ENCODE measurements at regions of chr1 and their contacts with region 1.

Region 1: GRCh38 chr1:26279456-26280332 is at the start of gene SH3BGRL3:
- DNase-seq: peak; percentile 87
- ATAC-seq: peak; percentile 38
- H3K4me3 ChIP-seq: peak within 1 kb of the TSS; percentile 75
- H3K27ac ChIP-seq: peak within 1 kb of the TSS; percentile 99
- H3K4me1 ChIP-seq: peaks cover 84% of the 10 kb centered on the region
- H3K27me3 ChIP-seq: no peaks in the 10 kb centered on the region
- CTCF ChIP-seq: peak; percentile 56
- total RNA-seq, gene SH3BGRL3: 181 and 193 TPM in 2 replicates

Region 2: GRCh38 chr1:25971066-25971810 is 308.5 kb before region 1 on chr1:
- CTCF ChIA-PET with region 1: no interaction called
- POLR2A ChIA-PET with region 1: no interaction called
- intact Hi-C with region 1: no loop called
- DNase-seq: no peak
- ATAC-seq: no peak
- H3K4me3 ChIP-seq: no peak overlapping the region
- H3K27ac ChIP-seq: no peak overlapping the region
- H3K4me1 ChIP-seq: no peaks in the 10 kb centered on the region
- H3K27me3 ChIP-seq: no peaks in the 10 kb centered on the region
- CTCF ChIP-seq: no peak

Region 3: DNA sequence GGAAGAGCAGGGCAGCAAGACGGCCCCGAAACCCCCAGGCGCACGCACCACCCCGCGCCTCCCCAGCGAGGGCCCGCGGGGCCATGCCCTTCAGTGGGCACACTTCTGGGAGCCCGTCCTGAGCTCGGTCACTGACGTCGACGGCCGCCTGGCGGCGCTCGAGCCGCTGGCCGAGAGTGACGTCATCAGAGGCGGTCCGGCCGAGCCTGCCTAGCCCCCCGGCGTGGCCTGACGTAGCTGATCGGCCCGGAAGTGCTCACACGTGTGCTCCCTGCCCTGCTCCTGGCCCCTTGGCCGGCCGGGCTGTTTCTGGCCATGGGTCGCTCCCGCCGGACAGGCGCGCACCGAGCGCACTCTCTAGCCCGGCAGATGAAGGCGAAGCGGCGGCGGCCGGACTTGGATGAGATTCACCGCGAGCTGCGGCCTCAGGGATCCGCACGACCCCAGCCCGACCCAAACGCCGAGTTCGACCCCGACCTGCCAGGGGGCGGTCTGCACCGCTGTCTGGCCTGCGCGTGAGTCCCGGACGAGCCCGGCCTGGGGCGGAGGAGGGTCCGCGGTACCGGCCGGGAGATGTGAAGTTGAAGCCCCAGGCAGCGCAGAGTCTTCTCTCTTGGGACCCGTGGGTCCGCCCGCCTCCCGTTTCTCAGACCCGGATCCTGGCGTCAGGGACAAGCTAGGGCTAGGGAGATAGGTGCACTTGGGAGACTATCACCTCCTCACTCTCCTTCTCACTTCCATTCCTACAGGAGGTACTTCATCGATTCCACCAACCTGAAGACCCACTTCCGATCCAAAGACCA is 109.8 kb before region 1 on chr1 and contains the start of gene ZNF593:
- CTCF ChIA-PET with region 1: interaction called, 5 read pairs
- POLR2A ChIA-PET with region 1: no interaction called
- intact Hi-C with region 1: loop called (anchors 2 kb)
- DNase-seq: peak; percentile 92
- ATAC-seq: peak; percentile 95
- H3K4me3 ChIP-seq: peak within 1 kb of the TSS; percentile 98
- H3K27ac ChIP-seq: peak within 1 kb of the TSS; percentile 72
- H3K4me1 ChIP-seq: peaks cover 11% of the 10 kb centered on the region
- H3K27me3 ChIP-seq: no peaks in the 10 kb centered on the region
- CTCF ChIP-seq: peak; percentile 81
- total RNA-seq, gene ZNF593: 155 and 165 TPM in 2 replicates

Region 4: GRCh38 chr1:26218906-26219494 is 60.7 kb before region 1 on chr1:
- CTCF ChIA-PET with region 1: no interaction called
- POLR2A ChIA-PET with region 1: no interaction called
- intact Hi-C with region 1: no loop called
- DNase-seq: no peak
- ATAC-seq: no peak
- H3K4me3 ChIP-seq: no peak overlapping the region
- H3K27ac ChIP-seq: no peak overlapping the region
- H3K4me1 ChIP-seq: no peaks in the 10 kb centered on the region
- H3K27me3 ChIP-seq: no peaks in the 10 kb centered on the region
- CTCF ChIP-seq: no peak

Region 5: GRCh38 chr1:26259578-26259977 is 20.1 kb before region 1 on chr1:
- CTCF ChIA-PET with region 1: no interaction called
- POLR2A ChIA-PET with region 1: no interaction called
- intact Hi-C with region 1: no loop called
- DNase-seq: no peak
- ATAC-seq: no peak
- H3K4me3 ChIP-seq: no peak overlapping the region
- H3K27ac ChIP-seq: no peak overlapping the region
- H3K4me1 ChIP-seq: no peaks in the 10 kb centered on the region
- H3K27me3 ChIP-seq: no peaks in the 10 kb centered on the region
- CTCF ChIP-seq: no peak

Region 6: GRCh38 chr1:26306290-26307229 is 26.9 kb after region 1 on chr1 and contains the start of gene UBXN11:
- CTCF ChIA-PET with region 1: interaction called, 3 read pairs
- POLR2A ChIA-PET with region 1: interaction called, 3 read pairs
- intact Hi-C with region 1: loop called (anchors 2 kb)
- DNase-seq: peak; percentile 98
- ATAC-seq: peak; percentile 98
- H3K4me3 ChIP-seq: peak within 1 kb of the TSS; percentile 88
- H3K27ac ChIP-seq: peak within 1 kb of the TSS; percentile 22
- H3K4me1 ChIP-seq: peaks cover 32% of the 10 kb centered on the region
- H3K27me3 ChIP-seq: no peaks in the 10 kb centered on the region
- CTCF ChIP-seq: no peak
- total RNA-seq, gene UBXN11: 19.4 and 24.6 TPM in 2 replicates